Calu3 (cell line): ENCODE measurements at regions of chr19 and their contacts with region 1.

Region 1: GRCh38 chr19:39557441-39558151 is 17.6 kb upstream of the EID2 start:
- DNase-seq: peak; percentile 46
- H3K4me3 Mint-ChIP-seq: peak overlapping the region; percentile 49
- H3K27ac Mint-ChIP-seq: peak overlapping the region; percentile 28
- H3K4me1 Mint-ChIP-seq: peaks cover 22% of the 10 kb centered on the region
- H3K27me3 Mint-ChIP-seq: peaks cover 19% of the 10 kb centered on the region
- CTCF ChIP-seq: no peak

Region 2: DNA sequence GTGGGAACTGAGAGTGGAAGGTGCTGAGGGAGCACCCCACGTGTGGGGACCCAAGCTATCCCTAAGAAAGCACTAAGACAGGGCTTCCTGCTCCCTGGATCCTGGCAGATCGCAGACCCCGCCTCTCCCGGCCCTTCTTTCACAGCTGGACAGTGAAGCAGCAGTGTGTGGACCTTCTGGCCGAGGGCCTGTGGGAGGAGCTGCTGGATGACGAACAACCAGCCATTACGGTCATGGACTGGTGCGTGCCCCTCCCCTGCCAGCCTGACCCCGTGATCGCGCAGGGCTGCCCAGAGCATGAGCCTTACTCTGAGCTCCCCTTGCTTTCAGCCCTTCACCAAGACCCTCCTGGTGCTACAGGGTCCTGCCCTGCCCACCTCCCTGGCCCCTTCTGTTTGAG is 358.6 kb before region 1 on chr19:
- CTCF ChIA-PET with region 1: no interaction called
- intact Hi-C with region 1: no loop called
- DNase-seq: no peak
- H3K4me3 Mint-ChIP-seq: no peak overlapping the region
- H3K27ac Mint-ChIP-seq: no peak overlapping the region
- H3K4me1 Mint-ChIP-seq: peaks cover 31% of the 10 kb centered on the region
- H3K27me3 Mint-ChIP-seq: peaks cover 39% of the 10 kb centered on the region
- CTCF ChIP-seq: no peak

Region 3: GRCh38 chr19:39502640-39503417 is 54.8 kb before region 1 on chr19:
- CTCF ChIA-PET with region 1: no interaction called
- intact Hi-C with region 1: no loop called
- DNase-seq: peak; percentile 65
- H3K4me3 Mint-ChIP-seq: no peak overlapping the region
- H3K27ac Mint-ChIP-seq: no peak overlapping the region
- H3K4me1 Mint-ChIP-seq: peaks cover 20% of the 10 kb centered on the region
- H3K27me3 Mint-ChIP-seq: peaks cover 91% of the 10 kb centered on the region
- CTCF ChIP-seq: peak; percentile 99

Region 4: DNA sequence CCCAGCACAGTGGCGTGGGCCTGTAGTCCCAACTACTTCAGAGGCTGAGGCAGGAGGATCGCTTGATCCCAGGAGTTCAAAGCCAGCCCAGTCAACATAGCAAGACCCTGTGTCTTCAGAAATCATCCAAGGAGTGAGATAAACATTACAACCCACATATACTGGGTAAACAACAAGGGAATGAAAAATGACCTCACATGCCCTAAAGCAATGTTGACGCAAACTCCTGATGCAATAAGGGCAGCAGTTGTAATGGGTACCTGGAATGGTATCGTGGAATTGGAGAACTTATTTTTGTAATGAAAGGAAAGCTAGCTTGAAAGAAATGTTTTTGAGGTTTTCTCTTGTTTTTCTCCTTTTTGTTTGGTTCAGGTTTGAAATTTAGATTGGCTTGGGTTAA is 73.6 kb after region 1 on chr19:
- CTCF ChIA-PET with region 1: no interaction called
- intact Hi-C with region 1: loop called (anchors 2 kb)
- DNase-seq: no peak
- H3K4me3 Mint-ChIP-seq: no peak overlapping the region
- H3K27ac Mint-ChIP-seq: no peak overlapping the region
- H3K4me1 Mint-ChIP-seq: no peaks in the 10 kb centered on the region
- H3K27me3 Mint-ChIP-seq: peaks cover 53% of the 10 kb centered on the region
- CTCF ChIP-seq: no peak

Region 5: GRCh38 chr19:39765091-39766076 is 207.8 kb after region 1 on chr19:
- CTCF ChIA-PET with region 1: no interaction called
- intact Hi-C with region 1: loop called (anchors 10 kb)
- DNase-seq: peak; percentile 71
- H3K4me3 Mint-ChIP-seq: no peak overlapping the region
- H3K27ac Mint-ChIP-seq: no peak overlapping the region
- H3K4me1 Mint-ChIP-seq: no peaks in the 10 kb centered on the region
- H3K27me3 Mint-ChIP-seq: peaks cover 65% of the 10 kb centered on the region
- CTCF ChIP-seq: peak; percentile 70